ENCODE measurements at regions of chr10 and their contacts with region 1.

Region 1: DNA sequence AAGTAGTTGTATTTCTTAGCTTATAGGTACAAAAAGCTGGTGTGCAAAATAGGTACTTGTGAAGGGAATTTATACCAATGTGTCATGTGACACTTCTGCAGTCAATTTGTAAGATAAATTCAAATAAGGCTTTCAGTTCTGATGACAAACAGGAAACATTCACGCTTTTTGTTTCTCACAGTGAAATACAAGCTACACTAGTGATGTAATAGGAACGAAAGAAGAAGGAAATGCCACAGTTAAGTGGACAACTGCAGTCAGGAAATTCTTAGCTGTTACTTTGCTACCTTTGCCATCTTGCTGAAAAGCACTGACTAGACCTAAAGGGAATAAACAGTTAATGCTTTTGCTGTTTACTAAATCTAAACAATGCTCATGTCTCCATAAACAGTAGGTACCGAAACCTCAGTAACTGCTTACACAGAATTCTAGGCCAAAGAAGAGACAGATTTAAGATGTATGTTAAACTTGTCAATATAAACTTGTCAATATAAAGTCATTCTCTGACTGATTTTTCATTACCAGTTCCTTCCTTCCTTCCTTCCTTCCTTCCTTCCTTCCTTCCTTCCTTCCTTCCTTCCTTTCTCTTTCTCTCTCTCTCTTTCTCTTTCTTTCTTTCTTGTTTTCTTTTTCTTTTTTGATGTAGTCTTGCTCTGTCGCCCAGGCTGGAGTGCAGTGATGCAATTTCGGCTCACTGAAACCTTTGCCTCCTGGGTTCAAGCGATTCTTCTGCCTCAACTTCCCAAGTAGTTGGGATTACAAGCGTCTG is 10.1 kb downstream of the OTUD1 start:
- DNase-seq: peak; percentile 87
- ATAC-seq: peak; percentile 85
- H3K4me3 ChIP-seq: peak overlapping the region in 1 of 5 experiments; percentile 27
- H3K4me3 Mint-ChIP-seq: peak overlapping the region; percentile 84
- H3K27ac ChIP-seq: peak overlapping the region; percentile 74 to 91
- H3K27ac Mint-ChIP-seq: peak overlapping the region; percentile 95
- H3K4me1 ChIP-seq: peaks cover 64 to 74% of the 10 kb centered on the region in 2 donors
- H3K4me1 Mint-ChIP-seq: peaks cover 67% of the 10 kb centered on the region
- H3K27me3 ChIP-seq: no peaks in the 10 kb centered on the region
- H3K27me3 Mint-ChIP-seq: no peaks in the 10 kb centered on the region
- CTCF ChIP-seq: no peak

Region 2: DNA sequence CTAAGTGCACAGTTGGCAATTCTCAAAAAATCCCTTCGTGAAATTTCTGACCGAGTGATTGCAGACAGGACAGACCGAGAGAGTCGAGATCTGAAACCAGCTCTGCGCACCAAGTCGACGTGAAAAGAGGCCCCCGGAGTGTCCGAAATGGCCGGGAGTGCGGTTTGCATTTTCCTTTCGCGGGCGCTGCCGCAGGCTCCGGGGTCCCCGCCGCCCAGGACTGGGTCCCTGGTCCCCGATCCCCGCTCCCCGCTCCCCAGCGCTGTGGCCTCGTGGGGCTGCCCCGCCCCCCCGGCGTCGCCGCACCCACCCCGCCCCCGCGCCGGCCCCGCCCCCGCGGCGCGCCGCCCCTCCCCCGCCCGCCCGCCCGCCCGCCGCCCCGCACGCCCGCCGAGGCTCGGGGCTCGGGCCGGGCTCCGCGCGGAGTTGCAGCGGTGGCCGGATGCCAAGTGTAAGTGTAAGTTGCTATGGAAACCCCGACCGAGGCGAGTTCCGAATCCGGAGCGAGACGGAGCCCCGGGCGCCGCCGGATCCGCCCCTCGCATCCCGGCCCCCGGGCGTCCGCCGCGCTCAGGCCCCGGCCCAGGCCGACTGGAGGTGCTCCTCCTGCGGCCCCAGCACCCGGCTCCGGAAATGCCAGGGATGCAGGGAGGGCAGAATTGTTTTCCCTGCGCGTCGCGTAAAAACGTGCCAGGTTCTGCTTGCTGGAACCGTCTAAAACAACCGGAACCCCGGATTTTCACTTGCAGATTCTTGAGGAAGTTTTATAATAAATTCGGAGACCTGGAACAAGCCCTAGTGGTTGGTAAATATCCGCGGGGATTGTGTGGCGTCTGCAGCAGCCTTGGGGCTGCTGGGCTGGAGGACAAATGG is 1123.5 kb before region 1 on chr10:
- CTCF ChIA-PET with region 1: no interaction called
- POLR2A ChIA-PET with region 1: no interaction called
- intact Hi-C with region 1: loop called (anchors 5 kb)
- DNase-seq: peak; percentile 85
- ATAC-seq: peak; percentile 32
- H3K4me3 ChIP-seq: peak overlapping the region; percentile 52 to 80 (median 73)
- H3K4me3 Mint-ChIP-seq: peak overlapping the region; percentile 90
- H3K27ac ChIP-seq: peak overlapping the region; percentile 0 to 63
- H3K27ac Mint-ChIP-seq: peak overlapping the region; percentile 90
- H3K4me1 ChIP-seq: peaks cover 28 to 37% of the 10 kb centered on the region in 2 donors
- H3K4me1 Mint-ChIP-seq: peaks cover 39% of the 10 kb centered on the region
- H3K27me3 ChIP-seq: peaks cover 0 to 16% (median 4%) of the 10 kb centered on the region in 4 experiments
- H3K27me3 Mint-ChIP-seq: no peaks in the 10 kb centered on the region
- CTCF ChIP-seq: no peak

Region 3: GRCh38 chr10:23376229-23376655 is 72.7 kb before region 1 on chr10:
- CTCF ChIA-PET with region 1: no interaction called
- POLR2A ChIA-PET with region 1: no interaction called
- intact Hi-C with region 1: no loop called
- DNase-seq: no peak
- ATAC-seq: no peak
- H3K4me3 ChIP-seq: no peak overlapping the region
- H3K4me3 Mint-ChIP-seq: no peak overlapping the region
- H3K27ac ChIP-seq: no peak overlapping the region
- H3K27ac Mint-ChIP-seq: no peak overlapping the region
- H3K4me1 ChIP-seq: no peaks in the 10 kb centered on the region
- H3K4me1 Mint-ChIP-seq: peaks cover 6% of the 10 kb centered on the region
- H3K27me3 ChIP-seq: no peaks in the 10 kb centered on the region
- H3K27me3 Mint-ChIP-seq: peaks cover 22% of the 10 kb centered on the region
- CTCF ChIP-seq: no peak

Region 4: DNA sequence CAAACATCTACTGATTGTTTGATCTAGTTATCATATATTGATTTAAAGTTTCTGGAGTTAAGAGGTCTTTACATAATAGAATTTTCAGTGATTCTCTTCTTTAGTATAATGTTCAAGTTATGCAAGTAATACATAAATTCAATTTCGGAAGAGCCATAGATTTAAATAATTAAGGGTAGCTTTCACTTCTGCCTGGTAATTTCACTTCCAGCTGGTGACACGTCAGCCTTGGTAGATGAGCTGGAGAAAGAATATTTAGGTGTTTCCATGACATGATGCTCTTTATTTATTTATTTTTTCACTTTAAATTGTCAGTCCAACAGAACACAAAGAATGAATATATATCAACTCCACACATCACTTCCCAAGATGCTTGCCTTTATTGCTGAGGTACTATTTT is 15.3 kb before region 1 on chr10:
- CTCF ChIA-PET with region 1: interaction called, 5 read pairs
- POLR2A ChIA-PET with region 1: interaction called, 24 read pairs
- intact Hi-C with region 1: loop called (anchors 2 kb)
- DNase-seq: peak; percentile 60
- ATAC-seq: no peak
- H3K4me3 ChIP-seq: no peak overlapping the region
- H3K4me3 Mint-ChIP-seq: no peak overlapping the region
- H3K27ac ChIP-seq: no peak overlapping the region
- H3K27ac Mint-ChIP-seq: no peak overlapping the region
- H3K4me1 ChIP-seq: peaks cover 9 to 16% of the 10 kb centered on the region in 2 donors
- H3K4me1 Mint-ChIP-seq: peaks cover 28% of the 10 kb centered on the region
- H3K27me3 ChIP-seq: no peaks in the 10 kb centered on the region
- H3K27me3 Mint-ChIP-seq: no peaks in the 10 kb centered on the region
- CTCF ChIP-seq: no peak